Heart right ventricle (tissue), 16 donors: ENCODE measurements at regions of chr2 and their contacts with region 1.

Region 1: GRCh38 chr2:153218851-153219250 is 259.7 kb downstream of the RPRM start:
- DNase-seq: no peak
- ATAC-seq: no peak
- H3K4me3 ChIP-seq: no peak overlapping the region
- H3K27ac ChIP-seq: no peak overlapping the region
- H3K4me1 ChIP-seq: no peaks in the 10 kb centered on the region
- H3K27me3 ChIP-seq: no peaks in the 10 kb centered on the region
- CTCF ChIP-seq: no peak

Region 2: DNA sequence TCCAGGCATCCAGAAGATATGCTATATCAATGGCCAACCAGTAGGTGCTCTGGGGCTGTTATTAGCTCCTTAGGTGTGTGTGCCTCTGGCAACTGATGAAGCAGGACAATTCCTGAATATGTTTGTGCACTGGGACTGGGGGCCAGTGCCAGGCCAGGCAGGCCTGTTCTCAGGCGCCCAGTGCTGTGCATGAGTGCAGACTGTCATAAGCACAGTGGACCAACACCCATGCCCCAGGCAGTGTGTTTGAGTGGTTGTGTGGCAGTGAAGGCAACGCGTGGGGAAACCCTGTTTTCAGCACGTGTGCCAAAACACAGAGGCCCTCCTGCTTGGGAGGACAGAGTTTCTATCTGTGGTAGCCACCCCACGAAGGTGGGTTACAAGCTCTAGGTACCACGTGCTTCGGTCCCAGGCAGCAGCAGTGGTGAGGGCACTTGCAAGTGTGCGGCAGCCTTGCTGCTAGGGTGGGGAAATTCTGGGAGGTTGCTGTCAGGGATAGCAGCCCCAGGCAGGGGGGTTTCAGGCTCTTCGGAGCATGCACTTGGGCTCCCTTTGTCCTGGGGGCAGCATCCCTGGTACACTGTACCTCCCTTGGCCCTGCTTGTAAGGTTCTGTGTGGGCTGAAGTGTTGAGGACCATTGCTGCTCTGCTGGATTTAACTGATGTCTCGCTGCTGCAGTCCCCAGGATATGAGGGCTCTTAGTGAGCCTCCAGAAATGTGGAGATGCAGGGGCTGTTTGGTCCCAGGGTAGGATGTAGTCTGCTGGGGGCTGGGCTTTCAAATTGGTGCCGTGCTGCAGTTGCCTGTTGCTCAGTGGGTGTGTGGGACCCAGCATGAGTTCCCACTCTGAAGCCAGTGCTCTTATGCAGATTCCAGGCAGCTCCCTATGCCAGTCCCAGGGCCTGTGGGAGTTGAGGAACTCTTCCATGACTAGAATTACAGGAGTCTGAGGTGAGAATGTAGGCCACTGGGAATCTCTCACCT is 21.2 kb before region 1 on chr2:
- intact Hi-C with region 1: no loop called
- DNase-seq: no peak
- ATAC-seq: no peak
- H3K4me3 ChIP-seq: no peak overlapping the region
- H3K27ac ChIP-seq: no peak overlapping the region
- H3K4me1 ChIP-seq: no peaks in the 10 kb centered on the region
- H3K27me3 ChIP-seq: no peaks in the 10 kb centered on the region
- CTCF ChIP-seq: no peak

Region 3: GRCh38 chr2:153294199-153294786 is 75.4 kb after region 1 on chr2:
- intact Hi-C with region 1: loop called in 1 of 10 experiments (anchors 2 kb)
- DNase-seq: no peak
- ATAC-seq: no peak
- H3K4me3 ChIP-seq: no peak overlapping the region
- H3K27ac ChIP-seq: no peak overlapping the region
- H3K4me1 ChIP-seq: no peaks in the 10 kb centered on the region
- H3K27me3 ChIP-seq: no peaks in the 10 kb centered on the region
- CTCF ChIP-seq: no peak

Region 4: GRCh38 chr2:153739394-153739793 is 520.5 kb after region 1 on chr2:
- intact Hi-C with region 1: no loop called
- DNase-seq: no peak
- ATAC-seq: no peak
- H3K4me3 ChIP-seq: no peak overlapping the region
- H3K27ac ChIP-seq: no peak overlapping the region
- H3K4me1 ChIP-seq: no peaks in the 10 kb centered on the region
- H3K27me3 ChIP-seq: no peaks in the 10 kb centered on the region
- CTCF ChIP-seq: no peak